Ascending aorta (tissue), 2 donors: ENCODE measurements at regions of chr9 and their contacts with region 1.

Region 1: DNA sequence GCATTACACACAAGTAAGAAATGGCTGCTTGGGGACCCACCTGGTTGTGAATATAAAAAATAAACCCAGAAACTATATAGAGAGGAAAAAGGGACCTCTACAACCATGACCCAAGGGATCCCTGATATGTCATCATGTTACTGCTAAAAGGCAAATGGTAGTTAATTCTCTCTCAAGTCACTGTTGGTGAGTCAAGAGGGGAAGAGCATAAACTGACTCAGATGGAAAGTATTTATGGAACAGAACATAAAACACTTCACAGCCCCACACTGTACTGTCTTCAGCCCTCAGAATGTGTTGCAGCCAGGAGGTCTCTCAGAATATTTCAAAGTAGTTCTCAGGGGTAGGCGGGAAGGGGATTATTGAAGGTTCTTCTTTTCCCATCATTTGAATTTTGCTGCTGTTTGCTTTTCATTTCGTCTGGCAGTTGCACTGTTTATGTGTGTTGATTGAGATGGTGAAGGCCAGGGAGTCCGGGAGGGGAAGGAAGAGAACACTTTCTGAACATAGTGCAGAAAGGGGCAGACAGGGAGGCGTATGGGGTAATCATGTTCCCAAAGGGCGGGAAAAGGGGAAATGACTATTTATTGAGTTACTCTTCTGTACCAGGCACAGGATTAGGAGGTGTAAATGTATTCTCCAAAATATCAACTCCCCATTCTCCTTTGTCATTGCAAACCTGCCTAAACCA is 85.5 kb downstream of the TEK start:
- DNase-seq: no peak
- H3K4me3 ChIP-seq: no peak overlapping the region
- H3K27ac ChIP-seq: peak overlapping the region; percentile 8 to 44
- H3K4me1 ChIP-seq: peaks cover 0 to 9% of the 10 kb centered on the region in 2 donors
- H3K27me3 ChIP-seq: no peaks in the 10 kb centered on the region
- CTCF ChIP-seq: no peak

Region 2: DNA sequence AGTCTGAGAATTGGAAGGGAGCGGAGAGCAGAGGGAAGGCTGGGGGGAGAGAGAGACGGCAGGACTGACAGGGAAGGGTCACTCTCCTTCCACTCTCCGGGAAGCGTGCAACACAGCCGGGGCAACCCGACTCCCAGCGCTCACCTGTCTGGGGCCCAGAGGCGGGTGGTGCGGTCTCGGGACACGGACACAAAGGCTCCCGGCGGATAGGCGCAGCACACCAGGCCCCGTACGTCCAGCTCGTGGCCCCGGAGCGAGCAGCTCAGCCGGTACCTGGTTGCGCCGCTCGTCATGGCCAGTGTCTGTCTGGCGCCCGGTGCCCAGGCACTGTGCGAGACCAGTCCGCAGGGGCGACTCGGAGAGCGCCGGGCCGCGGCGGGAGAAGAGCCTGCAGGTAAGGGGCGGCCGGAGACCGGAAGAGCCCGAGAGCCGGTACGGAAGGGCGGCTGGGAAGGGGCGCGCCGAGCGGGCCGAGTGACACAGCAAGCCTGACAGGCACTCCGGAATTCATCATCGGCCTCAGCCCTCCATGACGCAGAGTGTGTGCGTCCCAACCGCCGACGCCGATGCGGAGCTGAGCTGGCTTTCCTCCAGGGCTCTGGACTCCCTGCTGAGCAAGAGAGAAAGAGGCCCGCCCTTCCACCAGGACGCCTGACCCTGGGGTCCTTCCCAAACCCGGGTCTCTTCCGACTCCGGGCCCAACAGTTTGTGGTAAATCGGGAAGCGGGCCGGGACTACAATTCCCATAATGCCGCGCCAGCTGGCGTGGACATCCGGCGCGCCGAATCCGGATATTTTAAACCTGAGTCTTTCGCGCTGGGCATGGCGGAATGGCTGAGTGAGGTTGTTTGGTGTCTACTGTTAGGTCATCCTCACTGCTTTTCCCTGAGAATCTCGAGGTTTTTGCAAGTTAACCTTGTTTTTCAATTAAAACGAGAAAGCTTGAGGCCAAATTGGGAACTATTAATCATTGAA is 247.5 kb before region 1 on chr9 and contains the start of gene PLAA:
- intact Hi-C with region 1: loop called (anchors 5 kb)
- DNase-seq: peak; percentile 60 to 93
- H3K4me3 ChIP-seq: peak within 1 kb of the TSS; percentile 75 to 96
- H3K27ac ChIP-seq: peak within 1 kb of the TSS; percentile 95 to 99
- H3K4me1 ChIP-seq: peaks cover 11 to 18% of the 10 kb centered on the region in 2 donors
- H3K27me3 ChIP-seq: no peaks in the 10 kb centered on the region
- CTCF ChIP-seq: no peak
- total RNA-seq, gene PLAA: 14.5 TPM

Region 3: GRCh38 chr9:27033823-27034403 is 160.6 kb before region 1 on chr9:
- intact Hi-C with region 1: loop called (anchors 10 kb)
- DNase-seq: peak in 1 of 2 donors; percentile 71
- H3K4me3 ChIP-seq: no peak overlapping the region
- H3K27ac ChIP-seq: no peak overlapping the region
- H3K4me1 ChIP-seq: no peaks in the 10 kb centered on the region
- H3K27me3 ChIP-seq: no peaks in the 10 kb centered on the region
- CTCF ChIP-seq: peak; percentile 33 to 83 (median 76)

Region 4: DNA sequence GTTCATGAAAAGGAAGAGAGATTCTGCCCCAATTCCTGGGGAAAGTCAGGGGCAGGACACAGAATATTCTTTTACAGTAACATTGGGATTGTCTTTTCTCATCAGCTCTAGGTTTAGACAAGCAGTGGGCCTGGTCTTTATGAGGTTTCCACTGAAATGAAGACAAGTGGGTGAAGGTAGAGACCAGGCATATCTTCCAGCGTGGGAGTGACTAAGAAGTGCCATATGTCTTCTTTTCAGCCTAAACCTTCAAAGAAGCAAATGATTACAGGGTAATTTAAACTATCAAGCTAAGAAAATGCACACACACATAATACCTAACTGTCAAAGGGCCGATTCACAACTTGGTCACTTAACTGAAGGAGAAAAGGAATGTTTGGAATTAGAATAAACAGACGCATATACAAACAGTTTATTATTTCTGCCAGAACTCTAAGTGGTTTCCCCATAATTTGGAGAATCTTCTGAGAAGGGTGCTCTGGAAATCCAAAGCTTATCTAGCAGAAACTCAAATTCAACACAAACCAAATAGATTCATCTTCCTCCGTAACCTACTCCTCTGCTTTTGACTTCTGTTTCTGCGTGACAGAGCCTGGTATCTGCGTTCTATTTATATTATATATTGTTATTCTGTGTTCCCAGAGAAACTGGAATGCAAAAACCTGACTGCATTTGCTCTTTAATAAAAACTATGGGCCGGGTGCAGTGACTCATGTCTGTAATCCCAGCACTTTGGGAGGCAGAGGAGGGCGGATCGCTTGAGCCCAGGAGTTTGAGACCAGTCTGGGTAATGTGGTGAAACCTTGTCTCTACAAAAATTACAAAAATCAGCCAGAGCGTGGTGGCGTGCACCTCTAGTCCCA is 107.5 kb before region 1 on chr9:
- intact Hi-C with region 1: loop called (anchors 10 kb)
- DNase-seq: no peak
- H3K4me3 ChIP-seq: no peak overlapping the region
- H3K27ac ChIP-seq: peak overlapping the region; percentile 23 to 27
- H3K4me1 ChIP-seq: peaks cover 0 to 4% of the 10 kb centered on the region in 2 donors
- H3K27me3 ChIP-seq: no peaks in the 10 kb centered on the region
- CTCF ChIP-seq: no peak

Region 5: GRCh38 chr9:27154908-27155307 is 39.6 kb before region 1 on chr9:
- intact Hi-C with region 1: loop called (anchors 5 kb)
- DNase-seq: no peak
- H3K4me3 ChIP-seq: no peak overlapping the region
- H3K27ac ChIP-seq: no peak overlapping the region
- H3K4me1 ChIP-seq: peaks cover 2% of the 10 kb centered on the region in 2 donors
- H3K27me3 ChIP-seq: no peaks in the 10 kb centered on the region
- CTCF ChIP-seq: no peak

Region 6: GRCh38 chr9:27398982-27399653 is 204.6 kb after region 1 on chr9:
- intact Hi-C with region 1: no loop called
- DNase-seq: no peak
- H3K4me3 ChIP-seq: no peak overlapping the region
- H3K27ac ChIP-seq: no peak overlapping the region
- H3K4me1 ChIP-seq: peaks cover 0 to 10% of the 10 kb centered on the region in 2 donors
- H3K27me3 ChIP-seq: no peaks in the 10 kb centered on the region
- CTCF ChIP-seq: no peak